ENCODE measurements at regions of chr1 and their contacts with region 1.

Region 1: DNA sequence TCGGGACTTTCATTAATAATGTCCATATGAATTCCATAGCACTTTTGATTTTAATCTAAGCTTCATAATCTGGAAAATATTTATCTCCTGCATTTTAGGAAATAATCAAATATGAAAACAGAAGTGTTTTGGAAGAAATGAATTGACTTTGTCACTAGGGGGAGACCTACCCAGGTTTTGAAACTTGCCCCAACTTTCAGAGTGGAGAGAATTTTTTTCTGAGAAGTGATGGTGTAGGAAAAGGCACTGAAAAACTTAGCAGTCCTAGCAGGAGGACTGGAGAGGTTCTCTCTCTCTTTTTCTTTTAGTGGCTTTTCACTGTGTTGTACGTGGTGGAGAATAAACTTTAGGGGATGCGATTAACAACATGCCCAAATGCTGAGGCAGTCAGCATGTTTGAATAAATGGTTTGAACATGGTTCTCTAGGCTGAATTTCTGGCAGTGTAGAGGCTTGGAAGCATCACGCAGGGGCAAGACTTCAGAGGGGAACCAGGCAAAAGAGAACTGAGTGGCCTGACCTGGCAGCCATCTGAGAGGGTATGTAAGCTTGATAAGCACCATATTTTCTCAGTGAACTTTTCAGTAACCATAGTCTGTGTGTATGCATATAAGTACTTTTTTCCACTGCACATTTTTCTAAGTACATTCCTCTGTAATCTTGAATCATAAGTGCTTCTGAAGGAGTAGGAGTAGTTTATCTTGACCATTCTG is 68.3 kb upstream of the NEK7 start:
- H3K4me3 Mint-ChIP-seq: no peak overlapping the region
- H3K27ac Mint-ChIP-seq: no peak overlapping the region
- H3K4me1 Mint-ChIP-seq: peaks cover 6% of the 10 kb centered on the region
- H3K27me3 Mint-ChIP-seq: no peaks in the 10 kb centered on the region

Region 2: GRCh38 chr1:198363625-198364151 is 275.2 kb after region 1 on chr1:
- intact Hi-C with region 1: loop called (anchors 5 kb)
- H3K4me3 Mint-ChIP-seq: no peak overlapping the region
- H3K27ac Mint-ChIP-seq: no peak overlapping the region
- H3K4me1 Mint-ChIP-seq: peaks cover 9% of the 10 kb centered on the region
- H3K27me3 Mint-ChIP-seq: no peaks in the 10 kb centered on the region